ENCODE measurements at regions of chr16 and their contacts with region 1.

Region 1: GRCh38 chr16:19375561-19376158 is 42.0 kb upstream of the TMC5 start:
- DNase-seq: no peak

Region 2: GRCh38 chr16:18983565-18984424 is 391.9 kb before region 1 on chr16 and contains the start of gene TMC7:
- intact Hi-C with region 1: loop called (anchors 5 kb)
- DNase-seq: peak; percentile 89
- total RNA-seq, gene TMC7: 1.9 TPM

Region 3: GRCh38 chr16:19086322-19087199 is 289.1 kb before region 1 on chr16:
- intact Hi-C with region 1: loop called (anchors 1 kb)
- DNase-seq: peak; percentile 95

Region 4: DNA sequence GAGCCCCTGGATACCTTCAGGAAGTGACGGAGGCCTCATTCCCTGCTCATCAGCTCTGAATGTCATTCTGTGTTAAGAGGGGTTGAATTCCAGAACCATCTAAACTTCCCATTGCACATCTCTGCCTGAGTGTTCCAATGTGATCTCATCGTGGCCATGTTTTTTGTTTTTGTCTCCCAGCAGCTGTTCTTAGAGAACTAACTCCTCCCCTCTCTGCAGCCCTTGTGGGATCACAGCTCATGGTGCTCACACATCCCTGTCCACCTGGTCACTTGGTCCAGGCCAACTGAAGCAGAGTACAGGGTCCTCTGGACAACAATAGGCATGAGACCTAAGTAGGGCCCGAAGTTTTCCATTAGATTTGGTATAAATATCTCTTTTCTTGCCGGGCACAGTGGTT is 213.6 kb before region 1 on chr16:
- intact Hi-C with region 1: loop called (anchors 5 kb)
- DNase-seq: no peak

Region 5: GRCh38 chr16:19295393-19295792 is 80.3 kb before region 1 on chr16:
- intact Hi-C with region 1: no loop called
- DNase-seq: no peak

Region 6: GRCh38 chr16:19400697-19401096 is 25.0 kb after region 1 on chr16:
- intact Hi-C with region 1: no loop called
- DNase-seq: no peak

Region 7: DNA sequence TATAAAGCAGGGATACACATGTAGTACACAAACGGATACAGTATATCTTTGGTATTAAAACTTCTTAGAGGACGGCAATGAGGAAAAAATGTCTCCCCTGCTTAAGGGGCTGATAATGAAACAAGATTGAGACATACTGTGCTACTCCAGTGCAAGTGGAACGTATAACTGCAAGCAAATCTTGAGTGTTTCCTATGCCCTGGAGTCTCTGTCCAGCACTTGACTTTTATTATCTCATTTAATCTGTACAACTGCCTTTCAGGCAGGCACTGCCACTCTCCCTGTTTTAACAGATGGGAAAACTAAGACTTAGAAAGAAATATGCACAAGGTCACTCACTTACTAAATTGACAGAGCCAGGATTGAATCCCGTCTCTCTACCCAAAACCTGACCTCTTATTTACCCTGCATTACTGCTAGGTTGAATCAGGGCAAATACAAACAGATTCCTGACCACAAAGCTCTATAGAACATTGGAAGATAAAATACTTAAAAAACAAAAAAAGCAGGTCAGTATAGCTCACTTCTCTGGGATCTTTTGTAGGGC is 70.7 kb after region 1 on chr16:
- intact Hi-C with region 1: no loop called
- DNase-seq: no peak